ENCODE measurements at regions of chr4 and their contacts with region 1.

Region 1: GRCh38 chr4:139167774-139168444 is 9.1 kb downstream of the ELF2 start:
- DNase-seq: no peak
- ATAC-seq: peak; percentile 88 to 91
- H3K4me3 ChIP-seq: no peak overlapping the region
- H3K27ac ChIP-seq: peak overlapping the region; percentile 39 to 58 (median 53)
- H3K4me1 ChIP-seq: peaks cover 59 to 73% of the 10 kb centered on the region in 2 donors
- H3K27me3 ChIP-seq: no peaks in the 10 kb centered on the region
- CTCF ChIP-seq: peak; percentile 35 to 59 (median 57)
- POLR2A ChIP-seq: no peak

Region 2: GRCh38 chr4:139099366-139099982 is 68.4 kb before region 1 on chr4:
- in situ Hi-C with region 1: loop called (anchors 5 to 10 kb)
- intact Hi-C with region 1: loop called (anchors 1 kb)
- DNase-seq: peak; percentile 39 to 62
- ATAC-seq: peak; percentile 85 to 89
- H3K4me3 ChIP-seq: no peak overlapping the region
- H3K27ac ChIP-seq: no peak overlapping the region
- H3K4me1 ChIP-seq: peaks cover 17 to 21% of the 10 kb centered on the region in 2 donors
- H3K27me3 ChIP-seq: no peaks in the 10 kb centered on the region
- CTCF ChIP-seq: peak; percentile 71 to 89 (median 81)
- POLR2A ChIP-seq: no peak

Region 3: GRCh38 chr4:139108567-139109128 is 59.3 kb before region 1 on chr4:
- in situ Hi-C with region 1: loop called in 3 of 4 experiments (anchors 5 to 10 kb)
- intact Hi-C with region 1: no loop called
- DNase-seq: no peak
- ATAC-seq: no peak
- H3K4me3 ChIP-seq: no peak overlapping the region
- H3K27ac ChIP-seq: peak overlapping the region; percentile 39 to 68 (median 56)
- H3K4me1 ChIP-seq: peaks cover 17 to 21% of the 10 kb centered on the region in 2 donors
- H3K27me3 ChIP-seq: no peaks in the 10 kb centered on the region
- CTCF ChIP-seq: no peak
- POLR2A ChIP-seq: no peak

Measured in gastrocnemius medialis (tissue), 4 donors.